AG04449 (cell line): ENCODE measurements at regions of chr3 and their contacts with region 1.

Region 1: DNA sequence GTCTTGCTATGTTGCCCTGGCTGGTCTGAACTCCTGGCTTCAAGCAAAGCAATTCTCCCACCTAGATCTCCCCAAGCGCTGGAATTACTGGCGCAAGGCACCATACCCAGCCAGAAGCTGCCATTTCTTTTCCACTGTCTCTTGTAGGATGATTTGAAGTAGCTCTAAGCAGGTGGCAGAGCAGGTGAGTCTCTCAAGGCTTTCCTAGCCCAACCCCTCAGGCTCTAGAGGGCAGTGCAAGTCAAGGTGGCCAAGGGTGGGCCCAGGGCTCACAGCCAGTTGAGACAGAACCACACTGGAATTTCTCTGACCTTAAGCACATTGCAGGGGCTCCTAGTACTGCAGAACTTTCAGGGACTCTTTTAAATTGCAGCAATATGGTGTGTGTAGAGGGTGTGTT is 15.6 kb upstream of the DAG1 start:
- DNase-seq: no peak
- H3K4me3 ChIP-seq: no peak overlapping the region
- CTCF ChIP-seq: no peak

Region 2: GRCh38 chr3:49295489-49296058 is 158.9 kb before region 1 on chr3:
- CTCF ChIA-PET with region 1: interaction called, 26 read pairs
- POLR2A ChIA-PET with region 1: no interaction called
- DNase-seq: no peak
- H3K4me3 ChIP-seq: no peak overlapping the region
- CTCF ChIP-seq: peak; percentile 36

Region 3: DNA sequence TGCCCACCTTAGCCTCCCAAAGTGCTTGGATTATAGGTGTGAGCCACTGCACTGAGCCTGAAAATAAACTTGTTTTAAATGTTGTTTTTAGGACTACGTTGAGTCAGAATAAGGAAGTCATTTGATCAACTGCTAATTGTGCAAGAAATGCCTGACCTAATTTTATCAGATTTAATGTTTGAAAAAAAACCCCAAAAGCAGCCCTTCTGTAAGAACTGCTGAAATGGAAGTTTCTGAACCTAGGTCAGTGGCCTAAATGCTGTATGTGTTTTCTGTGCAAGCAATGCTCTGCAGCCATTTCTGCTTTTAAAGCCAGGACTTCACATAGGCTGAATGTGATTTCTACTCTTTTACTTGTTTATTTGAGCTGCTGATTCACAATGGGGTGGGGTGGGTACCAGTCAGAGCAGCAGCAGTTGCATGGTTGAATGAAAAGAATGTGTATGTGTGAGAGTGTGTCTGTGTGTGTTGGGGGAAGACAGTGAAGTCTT is 102.9 kb before region 1 on chr3:
- CTCF ChIA-PET with region 1: interaction called, 18 read pairs
- POLR2A ChIA-PET with region 1: no interaction called
- DNase-seq: peak; percentile 77
- H3K4me3 ChIP-seq: no peak overlapping the region
- CTCF ChIP-seq: no peak

Region 4: GRCh38 chr3:49469936-49470713 is 15.7 kb after region 1 on chr3 and contains the start of gene DAG1:
- CTCF ChIA-PET with region 1: interaction called, 10 read pairs
- POLR2A ChIA-PET with region 1: interaction called, 5 read pairs
- DNase-seq: no peak
- H3K4me3 ChIP-seq: peak within 1 kb of the TSS; percentile 72
- CTCF ChIP-seq: no peak